ENCODE measurements at regions of chr5 and their contacts with region 1.

Region 1: DNA sequence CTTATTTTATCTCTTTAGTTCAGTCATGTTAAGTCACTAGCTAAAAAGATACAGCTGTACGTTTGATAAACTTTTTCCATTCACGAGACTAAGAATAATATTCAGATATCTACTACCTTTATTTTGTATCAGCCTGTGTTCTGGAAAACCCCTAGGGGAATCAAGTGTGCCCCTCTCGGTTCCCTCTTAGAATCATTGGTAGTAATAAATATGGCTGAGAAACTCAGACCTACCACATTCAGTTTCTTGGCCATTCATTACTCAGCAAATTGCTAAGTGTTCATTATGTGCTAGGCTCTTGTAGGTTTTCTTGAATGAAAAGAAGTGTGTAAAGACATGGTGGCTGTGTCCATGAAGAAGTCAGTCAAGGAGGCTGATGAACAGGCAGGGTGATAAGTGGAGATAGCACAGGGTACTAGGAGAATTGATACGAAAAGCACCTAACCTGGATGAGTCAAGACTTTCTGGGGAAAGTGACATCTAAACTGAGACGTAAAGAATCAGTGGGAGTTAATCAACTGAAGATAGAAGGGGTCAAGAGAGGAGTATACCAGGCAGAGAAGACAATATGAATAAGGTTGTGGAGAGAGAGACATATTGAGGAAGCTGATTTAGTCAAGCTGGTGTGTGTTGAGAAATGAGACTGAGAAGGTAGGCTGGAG is 86.2 kb downstream of the CSNK1G3 start:
- DNase-seq: no peak
- ATAC-seq: peak; percentile 70
- H3K4me3 Mint-ChIP-seq: peak overlapping the region; percentile 33
- H3K27ac Mint-ChIP-seq: peak overlapping the region; percentile 76
- H3K4me1 Mint-ChIP-seq: peaks cover 17% of the 10 kb centered on the region
- H3K27me3 Mint-ChIP-seq: no peaks in the 10 kb centered on the region
- CTCF ChIP-seq: no peak

Region 2: GRCh38 chr5:123579410-123579809 is 18.7 kb before region 1 on chr5:
- CTCF ChIA-PET with region 1: no interaction called
- POLR2A ChIA-PET with region 1: no interaction called
- intact Hi-C with region 1: loop called (anchors 2 kb)
- DNase-seq: no peak
- ATAC-seq: no peak
- H3K4me3 Mint-ChIP-seq: no peak overlapping the region
- H3K27ac Mint-ChIP-seq: no peak overlapping the region
- H3K4me1 Mint-ChIP-seq: no peaks in the 10 kb centered on the region
- H3K27me3 Mint-ChIP-seq: no peaks in the 10 kb centered on the region
- CTCF ChIP-seq: no peak

Region 3: DNA sequence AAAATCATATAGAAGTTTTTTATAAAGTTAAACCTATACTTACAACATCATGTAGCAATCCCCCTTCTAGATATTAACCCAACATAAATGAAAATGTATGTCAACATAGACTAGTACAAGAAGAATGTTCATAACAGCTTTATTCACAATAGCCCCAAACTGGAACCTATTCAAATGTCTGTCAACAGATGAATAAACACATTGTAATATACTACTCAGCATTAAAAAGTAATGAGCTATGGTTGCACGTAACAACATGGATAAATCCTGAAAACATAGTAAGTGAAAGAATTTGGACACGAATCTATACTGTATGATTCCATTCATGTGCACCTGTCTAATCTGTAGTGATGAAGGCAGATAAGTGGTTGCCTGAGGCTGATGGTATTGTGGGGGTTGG is 12.3 kb before region 1 on chr5:
- CTCF ChIA-PET with region 1: no interaction called
- POLR2A ChIA-PET with region 1: no interaction called
- intact Hi-C with region 1: loop called (anchors 2 kb)
- DNase-seq: no peak
- ATAC-seq: no peak
- H3K4me3 Mint-ChIP-seq: no peak overlapping the region
- H3K27ac Mint-ChIP-seq: no peak overlapping the region
- H3K4me1 Mint-ChIP-seq: peaks cover 2% of the 10 kb centered on the region
- H3K27me3 Mint-ChIP-seq: no peaks in the 10 kb centered on the region
- CTCF ChIP-seq: no peak